BJ (cell line): ENCODE measurements at regions of chr14 and their contacts with region 1.

Region 1: GRCh38 chr14:59189786-59190771 is 1.6 kb downstream of the DAAM1 start:
- DNase-seq: peak; percentile 44
- H3K4me3 ChIP-seq: peak overlapping the region; percentile 95
- H3K27me3 ChIP-seq: peaks cover 12% of the 10 kb centered on the region
- CTCF ChIP-seq: 0 out of 2 replicates have a peak, but pooled peaks have one; percentile 21

Region 2: GRCh38 chr14:59044707-59045106 is 145.4 kb before region 1 on chr14:
- CTCF ChIA-PET with region 1: no interaction called
- POLR2A ChIA-PET with region 1: no interaction called
- DNase-seq: no peak
- H3K4me3 ChIP-seq: no peak overlapping the region
- H3K27me3 ChIP-seq: no peaks in the 10 kb centered on the region; the same call in 1 of the 2 replicates
- CTCF ChIP-seq: no peak

Region 3: GRCh38 chr14:59215325-59216181 is 25.5 kb after region 1 on chr14:
- CTCF ChIA-PET with region 1: no interaction called
- POLR2A ChIA-PET with region 1: no interaction called
- DNase-seq: peak; percentile 24
- H3K4me3 ChIP-seq: no peak overlapping the region
- H3K27me3 ChIP-seq: no peaks in the 10 kb centered on the region
- CTCF ChIP-seq: no peak

Region 4: GRCh38 chr14:59428581-59429012 is 238.5 kb after region 1 on chr14:
- CTCF ChIA-PET with region 1: interaction called, 11 read pairs
- POLR2A ChIA-PET with region 1: no interaction called
- DNase-seq: no peak
- H3K4me3 ChIP-seq: no peak overlapping the region
- H3K27me3 ChIP-seq: no peaks in the 10 kb centered on the region
- CTCF ChIP-seq: peak; percentile 43